Stomach (tissue), 19 donors: ENCODE measurements at regions of chr17 and their contacts with region 1.

Region 1: DNA sequence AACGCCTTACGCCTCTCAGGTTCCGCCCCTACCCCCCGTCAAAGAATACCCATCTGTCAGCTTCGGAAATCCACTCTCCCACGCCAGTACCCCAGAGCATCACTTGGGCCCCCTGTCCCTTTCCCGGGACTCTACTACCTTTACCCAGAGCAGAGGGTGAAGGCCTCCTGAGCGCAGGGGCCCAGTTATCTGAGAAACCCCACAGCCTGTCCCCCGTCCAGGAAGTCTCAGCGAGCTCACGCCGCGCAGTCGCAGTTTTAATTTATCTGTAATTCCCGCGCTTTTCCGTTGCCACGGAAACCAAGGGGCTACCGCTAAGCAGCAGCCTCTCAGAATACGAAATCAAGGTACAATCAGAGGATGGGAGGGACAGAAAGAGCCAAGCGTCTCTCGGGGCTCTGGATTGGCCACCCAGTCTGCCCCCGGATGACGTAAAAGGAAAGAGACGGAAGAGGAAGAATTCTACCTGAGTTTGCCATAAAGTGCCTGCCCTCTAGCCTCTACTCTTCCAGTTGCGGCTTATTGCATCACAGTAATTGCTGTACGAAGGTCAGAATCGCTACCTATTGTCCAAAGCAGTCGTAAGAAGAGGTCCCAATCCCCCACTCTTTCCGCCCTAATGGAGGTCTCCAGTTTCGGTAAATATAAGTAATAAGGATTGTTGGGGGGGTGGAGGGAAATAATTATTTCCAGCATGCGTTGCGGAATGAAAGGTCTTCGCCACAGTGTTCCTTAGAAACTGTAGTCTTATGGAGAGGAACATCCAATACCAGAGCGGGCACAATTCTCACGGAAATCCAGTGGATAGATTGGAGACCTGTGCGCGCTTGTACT is at the start of gene BRCA1:
- DNase-seq: peak; percentile 93 to 99
- H3K4me3 ChIP-seq: peak within 1 kb of the TSS; percentile 57 to 80 (median 70)
- H3K27ac ChIP-seq: peak within 1 kb of the TSS; percentile 77 to 89 (median 85)
- H3K4me1 ChIP-seq: peaks cover 20 to 56% (median 49%) of the 10 kb centered on the region in 4 donors
- H3K27me3 ChIP-seq: no peaks in the 10 kb centered on the region
- CTCF ChIP-seq: no peak
- EP300 ChIP-seq: no peak
- POLR2A ChIP-seq: no peak
- total RNA-seq, gene BRCA1: 13.0 to 47.5 (median 25.8) TPM

Region 2: GRCh38 chr17:43024407-43025289 is 100.7 kb before region 1 on chr17 and contains the start of gene RND2:
- intact Hi-C with region 1: loop called (anchors 10 kb)
- DNase-seq: peak; percentile 76 to 97
- H3K4me3 ChIP-seq: peak within 1 kb of the TSS; percentile 49 to 59 (median 52)
- H3K27ac ChIP-seq: peak within 1 kb of the TSS; percentile 49 to 84 (median 71)
- H3K4me1 ChIP-seq: peaks cover 24 to 46% (median 39%) of the 10 kb centered on the region in 4 donors
- H3K27me3 ChIP-seq: no peaks in the 10 kb centered on the region
- CTCF ChIP-seq: peak in 5 of 7 experiments; percentile 33 to 71 (median 60)
- EP300 ChIP-seq: no peak
- POLR2A ChIP-seq: no peak
- total RNA-seq, gene RND2: 0.37 to 5.8 (median 2.1) TPM in 4 of 5 donors, not detected in the other

Region 3: DNA sequence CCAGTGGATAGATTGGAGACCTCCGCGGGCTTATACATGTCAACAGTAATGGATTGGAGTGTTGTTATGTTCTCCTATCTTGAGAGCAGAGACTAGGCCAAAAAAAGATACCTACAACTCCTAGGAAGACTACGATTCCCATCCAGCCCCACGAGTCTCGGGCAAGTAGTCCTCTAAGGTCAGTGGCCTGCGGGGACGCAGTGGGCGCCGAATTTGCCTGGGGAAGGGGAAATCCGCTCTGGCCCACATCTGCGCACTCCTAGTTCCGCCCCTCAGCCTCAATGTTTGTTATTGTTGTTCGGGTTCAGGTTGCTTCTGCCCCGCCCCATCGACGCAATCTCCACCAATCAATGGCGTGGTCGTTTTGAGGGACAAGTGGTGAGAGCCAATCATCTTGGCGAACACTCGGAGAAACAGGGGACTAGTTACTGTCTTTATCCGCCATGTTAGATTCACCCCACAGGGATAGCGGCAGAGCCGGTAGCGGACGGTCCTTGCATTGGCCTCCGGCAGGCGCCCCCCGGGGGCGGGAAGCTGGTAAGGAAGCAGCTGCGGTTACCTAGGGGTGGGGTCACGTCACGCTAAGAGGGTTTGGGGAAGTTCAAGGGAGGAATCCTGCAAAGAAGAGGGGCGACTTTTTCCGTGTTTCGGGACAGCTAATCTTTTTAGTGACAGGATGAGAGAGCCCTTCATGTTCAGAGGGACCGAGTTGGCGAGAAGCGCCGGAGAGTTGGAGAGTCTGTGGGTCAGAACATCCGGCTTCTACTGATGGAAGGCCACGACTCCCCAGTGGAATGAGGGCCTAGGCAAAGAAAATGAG is 45.6 kb after region 1 on chr17 and contains the start of gene NBR1:
- intact Hi-C with region 1: loop called (anchors 5 kb)
- DNase-seq: peak; percentile 97 to 99
- H3K4me3 ChIP-seq: peak within 1 kb of the TSS; percentile 65 to 81 (median 72)
- H3K27ac ChIP-seq: peak within 1 kb of the TSS; percentile 89 to 99 (median 95)
- H3K4me1 ChIP-seq: peaks cover 45 to 74% (median 60%) of the 10 kb centered on the region in 4 donors
- H3K27me3 ChIP-seq: no peaks in the 10 kb centered on the region
- CTCF ChIP-seq: no peak
- EP300 ChIP-seq: no peak
- POLR2A ChIP-seq: peak in 2 of 4 donors; percentile 42 to 88
- total RNA-seq, gene NBR1: 29.0 to 107 (median 46.7) TPM